ENCODE measurements at regions of chr10 and their contacts with region 1.

Region 1: DNA sequence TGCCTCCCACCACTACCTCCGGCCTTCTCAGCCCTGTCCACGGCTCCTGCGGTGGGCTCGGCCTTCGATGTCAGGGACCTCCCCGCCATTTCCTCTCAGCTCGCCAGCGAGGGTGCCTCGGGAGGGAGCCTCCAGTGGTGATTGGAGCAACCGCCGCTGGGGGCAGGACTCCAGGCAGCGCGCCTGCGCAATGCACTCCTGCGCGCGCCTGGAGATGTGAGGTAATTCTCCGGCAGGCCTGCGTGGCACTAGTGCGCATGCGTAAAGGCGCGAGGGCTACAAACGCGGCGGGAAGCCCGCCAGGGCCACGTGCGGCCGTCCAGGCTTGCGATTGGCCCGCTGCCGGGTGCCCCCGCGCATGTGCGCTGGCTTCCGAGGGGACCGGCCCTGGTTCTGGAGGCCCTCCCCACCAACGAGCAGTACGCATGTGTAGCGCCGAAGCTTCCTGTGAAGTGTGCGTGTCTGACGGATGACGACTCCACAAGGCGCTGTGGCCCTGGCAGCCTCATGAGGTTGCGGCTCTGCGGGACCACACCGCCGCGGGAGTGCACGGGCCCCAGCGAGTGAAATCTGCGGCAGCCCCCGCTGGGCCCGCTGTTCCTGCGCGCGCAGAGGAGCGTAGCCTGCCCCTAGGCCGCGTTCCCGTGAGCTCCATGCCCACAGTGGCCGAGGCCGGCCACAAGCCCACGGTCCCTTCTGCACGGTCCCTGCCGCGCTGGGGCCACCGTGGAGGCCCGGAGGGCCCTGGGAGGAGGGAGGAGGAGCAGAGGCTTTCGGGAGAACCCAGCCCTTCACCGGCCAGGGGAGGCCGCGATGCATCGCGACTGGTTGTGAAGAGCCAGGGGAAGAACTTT is at the start of gene SYCE1:
- DNase-seq: peak; percentile 50
- ATAC-seq: peak; percentile 39
- total RNA-seq, gene SYCE1: 0.08 TPM

Region 2: GRCh38 chr10:133278577-133279265 is 286.9 kb before region 1 on chr10:
- intact Hi-C with region 1: no loop called
- DNase-seq: peak; percentile 74
- ATAC-seq: peak; percentile 21

Region 3: DNA sequence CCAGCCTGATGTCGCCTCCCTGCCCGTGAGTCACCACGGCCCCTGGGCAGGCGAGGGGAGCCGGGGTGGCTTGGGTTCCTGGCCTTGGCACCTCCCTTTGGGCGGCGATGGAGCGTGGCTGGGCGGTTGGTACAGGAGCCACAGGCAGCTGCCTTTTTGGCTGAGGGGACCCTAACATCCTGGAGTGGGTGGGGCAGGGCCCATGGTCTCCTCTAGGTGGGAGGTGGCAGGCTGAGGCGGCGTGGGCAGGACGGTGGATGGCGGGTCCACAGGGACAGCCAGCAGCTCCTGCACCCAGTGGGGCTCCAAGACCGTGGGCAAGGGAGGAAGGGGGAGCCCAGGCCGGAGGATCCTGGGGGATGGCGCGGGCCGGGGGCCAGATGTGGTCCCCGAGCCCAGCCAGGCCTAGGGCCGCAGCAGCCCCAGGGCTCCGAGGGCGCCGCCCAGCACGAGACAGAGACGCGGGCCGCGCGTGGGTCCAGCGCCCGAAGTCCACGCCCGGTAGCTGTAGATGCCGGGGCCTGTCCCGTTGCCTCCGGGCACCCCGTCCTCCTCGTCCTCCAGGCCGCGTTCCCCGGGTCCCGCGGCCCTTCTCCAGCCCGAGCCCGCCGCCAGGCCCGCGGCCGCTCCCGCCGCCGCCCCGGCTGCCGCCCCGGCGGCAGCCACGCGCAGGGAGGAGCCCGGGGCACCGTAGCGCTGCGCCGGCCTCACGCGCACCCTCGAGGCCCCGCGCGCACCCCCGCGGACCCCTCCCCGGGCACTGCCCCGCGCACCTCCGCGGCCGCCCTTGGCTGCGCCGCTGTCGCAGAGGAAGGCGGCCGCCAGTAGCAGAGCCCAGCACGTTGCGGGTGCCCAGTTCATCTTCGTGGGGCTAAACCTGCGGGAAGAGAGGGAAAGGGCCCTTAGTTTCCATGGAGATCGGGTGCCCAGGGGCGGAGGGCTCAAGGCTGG is 142.6 kb before region 1 on chr10:
- intact Hi-C with region 1: loop called (anchors 10 kb)
- DNase-seq: peak; percentile 34
- ATAC-seq: peak; percentile 35

Measured in Right ventricle myocardium superior (tissue), 1 donor.